Aorta (tissue), 5 donors: ENCODE measurements at regions of chr1 and their contacts with region 1.

Region 1: GRCh38 chr1:202625416-202626360 is 84.6 kb downstream of the SYT2 start:
- DNase-seq: peak; percentile 81 to 93
- ATAC-seq: peak; percentile 86
- H3K4me3 ChIP-seq: no peak overlapping the region
- H3K27ac ChIP-seq: no peak overlapping the region
- H3K4me1 ChIP-seq: no peaks in the 10 kb centered on the region
- H3K27me3 ChIP-seq: no peaks in the 10 kb centered on the region

Region 2: GRCh38 chr1:202462342-202463076 is 163.2 kb before region 1 on chr1:
- intact Hi-C with region 1: loop called in 1 of 2 experiments (anchors 10 kb)
- DNase-seq: no peak
- ATAC-seq: no peak
- H3K4me3 ChIP-seq: no peak overlapping the region
- H3K27ac ChIP-seq: no peak overlapping the region
- H3K4me1 ChIP-seq: peaks cover 0 to 2% of the 10 kb centered on the region in 2 donors
- H3K27me3 ChIP-seq: no peaks in the 10 kb centered on the region

Region 3: GRCh38 chr1:202571347-202572339 is 54.0 kb before region 1 on chr1:
- intact Hi-C with region 1: loop called in 1 of 2 experiments (anchors 10 kb)
- DNase-seq: no peak
- ATAC-seq: peak; percentile 59
- H3K4me3 ChIP-seq: no peak overlapping the region
- H3K27ac ChIP-seq: peak overlapping the region; percentile 36 to 82
- H3K4me1 ChIP-seq: peaks cover 6 to 19% of the 10 kb centered on the region in 2 donors
- H3K27me3 ChIP-seq: no peaks in the 10 kb centered on the region